ENCODE measurements at regions of chr5 and their contacts with region 1.

Region 1: GRCh38 chr5:92909602-92909962 is 671.4 kb downstream of the NR2F1-AS1 start:
- DNase-seq: no peak
- ATAC-seq: peak; percentile 38; the same call in 1 of the 3 replicates
- H3K4me3 ChIP-seq: no peak overlapping the region
- H3K27ac ChIP-seq: no peak overlapping the region
- H3K4me1 ChIP-seq: peaks cover 4% of the 10 kb centered on the region; the same call in 1 of the 2 replicates
- H3K27me3 ChIP-seq: no peaks in the 10 kb centered on the region
- CTCF ChIP-seq: peak; percentile 35 to 41 (median 36); a peak in 4 of 6 replicates
- EP300 ChIP-seq: no peak
- POLR2A ChIP-seq: no peak
- RAD21 ChIP-seq: peak; percentile 49

Region 2: DNA sequence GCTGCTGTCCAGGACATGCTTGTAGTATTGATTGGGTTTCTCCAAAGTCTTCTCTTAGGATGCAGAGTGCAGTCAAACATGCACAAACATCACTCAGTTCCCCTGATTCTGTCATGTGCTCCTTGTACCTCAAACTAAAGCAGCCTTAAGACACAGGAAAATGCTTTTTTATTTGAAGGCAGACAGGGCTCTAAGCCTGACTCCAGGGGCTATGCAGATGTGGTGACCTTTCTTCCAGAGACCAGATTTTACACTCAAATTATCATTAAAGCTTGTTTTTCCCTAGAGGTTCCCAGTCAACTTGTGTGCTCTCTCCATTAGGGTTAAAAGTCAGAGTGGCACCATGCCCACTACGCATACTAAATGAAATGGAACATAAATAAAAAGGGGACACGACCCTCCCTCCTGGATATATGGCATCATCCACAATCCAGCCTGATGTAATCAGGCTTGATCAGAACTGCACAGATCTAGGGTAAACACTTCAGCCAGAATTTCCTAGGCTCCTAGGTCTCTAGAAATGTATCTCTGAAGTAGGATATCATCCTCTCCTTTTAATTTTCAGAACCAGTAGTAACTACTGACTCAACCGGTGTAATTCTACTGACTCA is 99.6 kb before region 1 on chr5:
- CTCF ChIA-PET with region 1: no interaction called
- POLR2A ChIA-PET with region 1: no interaction called
- RAD21 ChIA-PET with region 1: no interaction called
- SMC1A ChIA-PET with region 1: no interaction called
- in situ Hi-C with region 1: no loop called
- intact Hi-C with region 1: no loop called
- DNase-seq: no peak
- ATAC-seq: no peak
- H3K4me3 ChIP-seq: no peak overlapping the region
- H3K27ac ChIP-seq: no peak overlapping the region
- H3K4me1 ChIP-seq: no peaks in the 10 kb centered on the region
- H3K27me3 ChIP-seq: no peaks in the 10 kb centered on the region
- CTCF ChIP-seq: no peak
- EP300 ChIP-seq: no peak
- POLR2A ChIP-seq: no peak
- RAD21 ChIP-seq: no peak

Region 3: DNA sequence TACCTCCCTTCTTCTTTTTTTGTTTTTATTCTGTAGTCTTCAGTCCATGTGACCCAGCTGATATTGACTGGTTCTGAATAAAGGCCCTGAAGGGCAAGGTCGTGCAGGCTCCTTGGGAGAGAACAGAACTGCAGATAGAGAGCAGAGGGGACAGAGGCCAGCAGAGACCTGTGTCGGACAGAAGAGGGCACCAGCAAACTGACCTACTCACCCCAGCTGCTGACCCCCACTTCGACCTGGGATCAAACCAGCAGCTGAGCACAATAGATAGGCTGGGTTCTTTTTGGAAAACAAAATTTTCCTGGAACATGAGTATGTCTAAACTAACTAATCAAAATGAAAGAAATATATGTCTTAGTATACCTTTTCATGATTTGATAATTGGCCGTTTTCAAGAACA is 23.6 kb before region 1 on chr5:
- CTCF ChIA-PET with region 1: interaction called, 3 read pairs
- POLR2A ChIA-PET with region 1: no interaction called
- RAD21 ChIA-PET with region 1: interaction called, 3 read pairs
- SMC1A ChIA-PET with region 1: interaction called, 18 read pairs
- in situ Hi-C with region 1: no loop called
- intact Hi-C with region 1: no loop called
- DNase-seq: no peak
- ATAC-seq: peak; percentile 76
- H3K4me3 ChIP-seq: no peak overlapping the region
- H3K27ac ChIP-seq: no peak overlapping the region
- H3K4me1 ChIP-seq: no peaks in the 10 kb centered on the region
- H3K27me3 ChIP-seq: no peaks in the 10 kb centered on the region
- CTCF ChIP-seq: peak in 2 of 3 experiments; percentile 22 to 25; a peak in 2 of 6 replicates
- EP300 ChIP-seq: no peak
- POLR2A ChIP-seq: no peak
- RAD21 ChIP-seq: peak; percentile 48; the same call in 1 of the 2 replicates

Region 4: GRCh38 chr5:92922231-92922967 is 12.8 kb after region 1 on chr5:
- CTCF ChIA-PET with region 1: interaction called, 9 read pairs
- POLR2A ChIA-PET with region 1: no interaction called
- RAD21 ChIA-PET with region 1: interaction called, 3 read pairs
- SMC1A ChIA-PET with region 1: interaction called, 14 read pairs
- in situ Hi-C with region 1: no loop called
- intact Hi-C with region 1: no loop called
- DNase-seq: no peak
- ATAC-seq: no peak
- H3K4me3 ChIP-seq: no peak overlapping the region
- H3K27ac ChIP-seq: no peak overlapping the region
- H3K4me1 ChIP-seq: no peaks in the 10 kb centered on the region
- H3K27me3 ChIP-seq: no peaks in the 10 kb centered on the region
- CTCF ChIP-seq: no peak
- EP300 ChIP-seq: no peak
- POLR2A ChIP-seq: no peak
- RAD21 ChIP-seq: no peak